ENCODE measurements at regions of chr3 and their contacts with region 1.

Region 1: GRCh38 chr3:109532257-109533216 is 195.2 kb upstream of the DPPA4 start:
- DNase-seq: peak; percentile 46
- H3K4me3 Mint-ChIP-seq: no peak overlapping the region
- H3K27ac Mint-ChIP-seq: no peak overlapping the region
- H3K4me1 Mint-ChIP-seq: no peaks in the 10 kb centered on the region
- H3K27me3 Mint-ChIP-seq: peaks cover 2% of the 10 kb centered on the region

Region 2: DNA sequence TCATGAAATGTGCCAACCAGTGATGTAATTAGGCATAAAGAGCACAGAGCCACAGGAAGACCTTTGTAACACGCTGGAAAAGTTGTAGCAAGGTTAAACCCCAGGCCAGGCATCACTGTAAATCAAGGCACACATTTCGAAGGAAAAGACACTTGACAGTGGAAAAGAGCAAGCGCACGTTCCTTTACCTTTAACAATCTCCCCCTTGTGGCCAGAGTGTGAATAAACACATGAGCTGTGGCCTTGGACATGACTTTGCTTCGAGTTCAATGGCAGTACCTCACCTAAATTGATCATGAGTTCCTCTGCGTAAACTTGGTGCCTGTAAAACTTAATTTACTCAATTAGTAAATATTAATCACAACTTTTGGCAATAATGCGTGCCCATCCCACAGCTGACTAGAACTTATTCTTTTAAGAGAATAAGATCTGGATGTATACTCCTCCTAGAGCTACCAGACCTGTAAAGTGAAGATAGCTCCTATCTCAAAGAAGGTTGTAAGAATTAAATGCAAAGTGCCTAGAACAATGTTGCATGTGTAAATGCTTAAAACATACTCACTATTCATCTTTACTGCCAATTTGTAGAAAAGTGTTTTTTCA is 782.1 kb after region 1 on chr3:
- CTCF ChIA-PET with region 1: interaction called, 11 read pairs
- POLR2A ChIA-PET with region 1: no interaction called
- DNase-seq: peak; percentile 45
- H3K4me3 Mint-ChIP-seq: no peak overlapping the region
- H3K27ac Mint-ChIP-seq: no peak overlapping the region
- H3K4me1 Mint-ChIP-seq: no peaks in the 10 kb centered on the region
- H3K27me3 Mint-ChIP-seq: no peaks in the 10 kb centered on the region